SK-N-SH (cell line): ENCODE measurements at regions of chr12 and their contacts with region 1.

Region 1: GRCh38 chr12:128771681-128772080 is 52.1 kb downstream of the SLC15A4 start:
- DNase-seq: no peak
- H3K4me3 ChIP-seq: no peak overlapping the region
- H3K27ac ChIP-seq: no peak overlapping the region
- H3K4me1 ChIP-seq: no peaks in the 10 kb centered on the region
- H3K27me3 ChIP-seq: no peaks in the 10 kb centered on the region
- CTCF ChIP-seq: no peak
- EP300 ChIP-seq: no peak
- RAD21 ChIP-seq: no peak

Region 2: DNA sequence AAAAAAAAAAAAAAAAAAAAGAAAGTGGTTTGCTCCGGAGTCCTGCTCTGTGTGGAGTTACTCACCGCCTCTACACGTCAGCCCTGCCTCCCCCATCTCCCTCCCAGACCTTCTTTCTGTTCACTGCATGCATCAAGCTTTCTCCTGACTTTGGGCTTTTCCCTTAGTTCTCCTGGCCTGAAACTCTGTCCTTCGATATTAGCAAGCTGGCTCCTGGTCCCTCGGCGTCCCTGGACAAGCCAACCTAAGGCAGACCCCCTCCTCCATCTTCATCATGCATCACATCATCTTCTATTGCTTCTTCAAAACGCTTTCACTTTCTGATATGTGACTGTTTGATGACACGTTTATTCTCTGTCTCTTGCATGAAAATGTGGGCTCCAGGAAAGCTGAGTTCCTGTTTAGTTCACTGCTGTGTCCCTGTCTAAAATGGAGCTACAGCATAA is 11.5 kb after region 1 on chr12:
- CTCF ChIA-PET with region 1: interaction called, 13 read pairs
- POLR2A ChIA-PET with region 1: no interaction called
- DNase-seq: no peak
- H3K4me3 ChIP-seq: no peak overlapping the region
- H3K27ac ChIP-seq: no peak overlapping the region
- H3K4me1 ChIP-seq: no peaks in the 10 kb centered on the region
- H3K27me3 ChIP-seq: no peaks in the 10 kb centered on the region
- CTCF ChIP-seq: no peak
- EP300 ChIP-seq: no peak
- RAD21 ChIP-seq: no peak

Region 3: DNA sequence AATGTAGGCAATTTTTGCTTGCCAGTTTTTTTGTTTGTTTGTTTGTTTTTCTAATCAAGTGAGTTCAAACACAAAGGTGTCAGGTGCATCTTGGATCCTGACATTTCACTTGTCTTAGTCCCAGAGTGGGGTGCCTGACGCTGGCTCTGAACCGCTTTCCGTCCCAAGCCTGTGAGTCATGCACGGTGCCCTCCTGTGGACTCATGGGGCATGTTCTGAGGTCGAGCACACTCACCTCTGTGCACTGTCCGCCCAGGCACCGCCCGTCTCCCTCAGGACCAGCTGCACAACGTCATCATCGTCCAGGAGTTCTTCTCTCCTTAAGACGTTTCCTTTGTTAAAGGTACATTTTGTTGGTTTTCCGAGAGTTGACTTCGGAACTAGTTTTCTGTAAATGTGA is 179.8 kb after region 1 on chr12:
- CTCF ChIA-PET with region 1: no interaction called
- POLR2A ChIA-PET with region 1: no interaction called
- DNase-seq: no peak
- H3K4me3 ChIP-seq: no peak overlapping the region
- H3K27ac ChIP-seq: no peak overlapping the region
- H3K4me1 ChIP-seq: no peaks in the 10 kb centered on the region
- H3K27me3 ChIP-seq: no peaks in the 10 kb centered on the region
- CTCF ChIP-seq: no peak
- EP300 ChIP-seq: no peak
- RAD21 ChIP-seq: no peak